ENCODE measurements at regions of chr1 and their contacts with region 1.

Region 1: GRCh38 chr1:167533851-167534300 is 15.5 kb upstream of the CD247 start:
- DNase-seq: peak; percentile 18
- H3K4me3 ChIP-seq: no peak overlapping the region
- H3K27ac ChIP-seq: no peak overlapping the region
- H3K27me3 ChIP-seq: peaks cover 5% of the 10 kb centered on the region
- CTCF ChIP-seq: peak; percentile 96

Region 2: GRCh38 chr1:167066333-167067122 is 467.3 kb before region 1 on chr1:
- CTCF ChIA-PET with region 1: interaction called, 12 read pairs
- POLR2A ChIA-PET with region 1: no interaction called
- DNase-seq: no peak
- H3K4me3 ChIP-seq: peak overlapping the region; percentile 36; the same call in 1 of the 2 replicates
- H3K27ac ChIP-seq: no peak overlapping the region
- H3K27me3 ChIP-seq: no peaks in the 10 kb centered on the region
- CTCF ChIP-seq: peak; percentile 94

Region 3: DNA sequence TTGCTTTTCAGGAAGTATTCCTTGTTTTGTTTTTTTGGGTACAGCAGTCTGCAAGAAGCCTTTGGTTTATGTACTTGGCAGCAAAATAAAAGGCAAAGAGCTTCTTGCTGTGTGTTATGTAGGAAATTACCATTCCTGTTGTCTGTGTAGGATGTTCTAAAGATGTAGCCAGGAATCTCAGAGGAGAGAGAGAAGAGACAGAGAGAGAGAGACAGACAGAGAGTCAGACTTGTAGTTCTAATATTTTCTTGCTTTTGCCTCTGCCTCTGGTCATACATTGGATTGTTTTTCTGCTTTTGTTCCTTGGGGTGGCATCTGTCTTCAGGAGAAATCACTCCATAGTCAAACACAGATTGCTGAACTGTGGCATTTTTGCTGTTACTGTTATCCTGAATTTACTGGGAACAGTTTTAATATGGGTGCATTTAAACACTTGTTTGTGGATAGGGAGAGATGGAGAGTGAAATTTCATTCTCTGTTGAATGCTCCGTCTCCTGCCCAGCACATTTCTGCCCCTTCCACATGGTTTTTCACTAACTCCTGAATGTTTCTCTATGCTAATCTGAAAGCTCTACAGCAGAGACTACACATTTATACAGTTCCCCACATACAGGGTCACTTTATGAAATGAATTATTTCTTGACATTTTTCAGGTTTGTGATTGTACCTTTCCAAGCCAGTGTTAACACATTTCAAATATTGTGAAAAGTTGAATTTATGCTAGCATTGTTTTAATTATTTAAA is 263.4 kb before region 1 on chr1:
- CTCF ChIA-PET with region 1: interaction called, 68 read pairs
- POLR2A ChIA-PET with region 1: no interaction called
- DNase-seq: no peak
- H3K4me3 ChIP-seq: no peak overlapping the region
- H3K27ac ChIP-seq: no peak overlapping the region
- H3K27me3 ChIP-seq: no peaks in the 10 kb centered on the region
- CTCF ChIP-seq: no peak

Region 4: GRCh38 chr1:167442124-167442848 is 91.6 kb before region 1 on chr1:
- CTCF ChIA-PET with region 1: interaction called, 10 read pairs
- POLR2A ChIA-PET with region 1: no interaction called
- DNase-seq: peak; percentile 23
- H3K4me3 ChIP-seq: no peak overlapping the region
- H3K27ac ChIP-seq: no peak overlapping the region
- H3K27me3 ChIP-seq: peaks cover 19% of the 10 kb centered on the region
- CTCF ChIP-seq: peak; percentile 87

Region 5: DNA sequence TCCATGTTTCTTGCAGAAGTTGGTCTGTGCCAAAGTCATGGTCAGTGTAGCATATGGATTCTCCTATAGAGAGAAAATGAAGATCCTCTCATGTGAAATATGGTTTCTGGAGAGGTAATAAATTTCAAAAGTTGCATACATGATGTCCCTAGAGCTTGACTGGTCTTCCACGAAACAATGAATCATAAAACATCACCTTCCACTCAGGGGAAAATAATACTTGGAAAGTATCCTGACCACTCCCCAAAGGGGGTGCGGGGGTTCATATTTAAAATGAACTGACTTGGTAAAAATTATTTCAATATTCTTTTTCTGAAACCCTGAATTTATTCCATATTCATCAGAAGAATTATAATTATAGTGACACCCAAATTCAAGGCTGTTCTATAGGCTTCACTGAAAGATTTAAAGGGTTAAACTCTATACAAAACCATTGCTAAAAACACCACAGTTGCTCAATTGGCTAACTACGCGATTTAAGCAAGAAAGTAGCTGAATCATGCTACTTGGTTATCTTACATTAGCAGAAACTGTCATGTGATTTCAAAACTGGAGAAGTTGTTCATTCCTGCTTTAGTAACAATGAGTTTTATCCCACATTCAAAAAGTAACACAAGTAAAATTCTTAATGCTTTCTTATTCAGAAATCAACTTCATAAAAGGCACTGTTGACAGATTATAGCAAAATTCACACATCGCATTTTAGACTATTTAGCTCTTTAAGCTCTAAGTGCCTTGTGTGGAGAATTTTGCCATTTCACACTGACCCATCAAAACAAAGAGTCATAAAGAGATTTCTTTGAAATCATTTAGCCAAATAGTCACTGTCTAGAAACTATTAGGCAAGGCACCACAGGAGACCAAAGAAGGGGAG is 14.4 kb after region 1 on chr1:
- CTCF ChIA-PET with region 1: interaction called, 14 read pairs
- POLR2A ChIA-PET with region 1: no interaction called
- DNase-seq: no peak
- H3K4me3 ChIP-seq: no peak overlapping the region
- H3K27ac ChIP-seq: no peak overlapping the region
- H3K27me3 ChIP-seq: peaks cover 6% of the 10 kb centered on the region
- CTCF ChIP-seq: no peak

Region 6: DNA sequence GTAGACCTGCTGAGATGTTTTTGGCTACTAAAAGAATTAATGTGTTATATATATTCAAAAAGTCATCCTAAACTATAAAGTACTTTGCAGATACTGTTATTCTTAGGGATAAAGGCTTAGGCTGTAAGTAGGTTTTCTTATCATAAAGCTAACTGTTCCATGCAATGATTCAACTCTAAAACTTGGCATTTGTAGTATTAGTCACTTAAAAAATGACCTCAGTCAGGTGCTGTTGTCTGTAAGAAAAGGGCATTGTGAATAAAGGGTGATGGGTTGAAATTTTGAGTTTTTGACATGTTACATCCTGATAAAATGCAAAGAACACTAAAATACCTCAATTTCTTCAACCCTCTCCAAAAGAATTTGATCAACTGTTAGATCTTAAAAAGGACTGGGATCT is 347.2 kb after region 1 on chr1:
- CTCF ChIA-PET with region 1: no interaction called
- POLR2A ChIA-PET with region 1: no interaction called
- DNase-seq: no peak
- H3K4me3 ChIP-seq: no peak overlapping the region
- H3K27ac ChIP-seq: no peak overlapping the region
- H3K27me3 ChIP-seq: no peaks in the 10 kb centered on the region
- CTCF ChIP-seq: no peak

Measured in AG04450 (cell line).